Posterior cingulate gyrus (tissue), 11 donors: ENCODE measurements at regions of chr13 and their contacts with region 1.

Region 1: GRCh38 chr13:113816946-113817859 is 46.7 kb downstream of the GAS6 start:
- DNase-seq: peak; percentile 47 to 96 (median 80)

Region 2: DNA sequence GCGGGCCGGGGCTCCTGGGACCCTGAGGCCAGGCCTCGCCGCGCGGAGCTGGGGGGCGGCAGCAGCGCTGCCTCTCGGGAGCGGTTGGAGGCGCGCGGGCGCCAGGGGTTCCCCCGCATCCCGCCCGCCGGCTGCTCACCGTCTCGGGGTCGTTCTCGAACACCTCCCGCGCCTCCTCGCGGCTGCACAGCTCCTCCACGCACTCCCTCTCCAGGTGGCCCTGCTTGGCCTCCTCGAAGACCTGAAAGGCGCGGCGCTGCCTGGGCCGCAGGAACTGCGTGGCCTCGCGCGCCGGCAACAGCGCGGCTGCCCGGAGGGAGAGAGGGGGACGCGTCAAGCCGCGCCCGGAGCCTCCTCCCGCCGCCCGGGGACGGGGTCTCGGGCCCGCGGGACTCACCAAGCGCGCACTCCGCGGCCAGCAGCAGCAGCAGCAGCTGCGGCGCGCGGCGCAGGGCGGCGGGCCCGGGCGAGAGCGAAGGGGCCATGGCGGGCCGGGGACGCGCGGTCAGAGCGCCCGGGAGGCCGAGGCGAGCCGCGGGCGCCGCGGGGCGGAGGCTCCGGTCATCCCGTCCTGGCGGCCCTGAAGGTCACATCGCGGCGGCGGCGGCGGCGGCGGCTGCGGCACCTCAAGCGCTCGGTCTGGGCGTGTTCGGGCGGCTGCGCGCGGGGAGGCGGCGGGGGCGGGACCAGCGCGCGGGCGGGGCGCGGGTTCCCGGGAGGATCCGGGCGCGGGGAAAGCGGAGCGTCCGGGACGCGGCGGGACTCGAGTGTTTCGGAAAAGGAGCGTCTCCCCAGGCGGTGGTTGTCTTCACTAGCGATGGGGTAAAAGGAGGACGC is 46.5 kb after region 1 on chr13 and contains the start of gene GAS6:
- intact Hi-C with region 1: loop called (anchors 5 kb)
- DNase-seq: peak in 9 of 10 donors; percentile 45 to 94 (median 66)

Region 3: GRCh38 chr13:113904411-113904810 is 87.2 kb after region 1 on chr13:
- intact Hi-C with region 1: loop called (anchors 10 kb)
- DNase-seq: peak in 5 of 10 donors; percentile 44 to 94 (median 60)

Region 4: DNA sequence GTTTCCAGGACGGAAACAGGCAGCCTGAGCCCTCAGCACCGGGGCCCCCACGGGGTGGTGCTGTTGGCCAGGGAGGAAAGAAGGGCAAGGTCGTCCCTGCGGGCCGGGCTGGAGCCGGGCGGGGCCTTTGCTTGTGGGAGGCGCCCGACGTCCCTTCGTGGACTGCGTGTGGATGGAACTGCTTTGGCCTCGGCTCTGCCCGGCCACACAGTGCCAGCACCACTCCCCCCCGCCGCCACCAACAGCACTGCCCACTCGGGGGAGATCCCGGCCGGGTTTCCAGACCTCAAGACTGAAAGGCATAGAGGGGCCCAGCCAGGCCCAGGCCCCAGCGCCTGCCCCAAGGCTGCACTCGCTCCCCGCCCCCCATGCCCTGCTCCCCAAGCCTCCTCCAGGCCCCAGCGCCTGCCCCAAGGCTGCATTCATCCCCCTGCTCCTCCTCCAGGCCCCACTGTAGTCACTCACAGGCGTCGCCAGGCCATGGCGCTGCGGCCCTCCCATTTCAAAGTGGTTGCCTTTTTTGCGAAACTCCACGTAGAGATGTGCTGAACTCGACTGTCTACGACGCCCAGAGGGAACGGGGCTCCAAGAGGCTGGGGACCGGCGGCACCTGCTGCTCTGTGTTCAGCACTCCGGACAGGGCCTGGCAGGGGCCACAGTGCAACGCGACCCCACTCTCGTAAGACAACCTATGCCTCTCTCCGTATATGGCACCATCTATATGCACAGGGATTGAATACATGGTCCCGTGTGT is 134.2 kb after region 1 on chr13:
- intact Hi-C with region 1: loop called (anchors 5 kb)
- DNase-seq: peak; percentile 59 to 96 (median 74)

Region 5: DNA sequence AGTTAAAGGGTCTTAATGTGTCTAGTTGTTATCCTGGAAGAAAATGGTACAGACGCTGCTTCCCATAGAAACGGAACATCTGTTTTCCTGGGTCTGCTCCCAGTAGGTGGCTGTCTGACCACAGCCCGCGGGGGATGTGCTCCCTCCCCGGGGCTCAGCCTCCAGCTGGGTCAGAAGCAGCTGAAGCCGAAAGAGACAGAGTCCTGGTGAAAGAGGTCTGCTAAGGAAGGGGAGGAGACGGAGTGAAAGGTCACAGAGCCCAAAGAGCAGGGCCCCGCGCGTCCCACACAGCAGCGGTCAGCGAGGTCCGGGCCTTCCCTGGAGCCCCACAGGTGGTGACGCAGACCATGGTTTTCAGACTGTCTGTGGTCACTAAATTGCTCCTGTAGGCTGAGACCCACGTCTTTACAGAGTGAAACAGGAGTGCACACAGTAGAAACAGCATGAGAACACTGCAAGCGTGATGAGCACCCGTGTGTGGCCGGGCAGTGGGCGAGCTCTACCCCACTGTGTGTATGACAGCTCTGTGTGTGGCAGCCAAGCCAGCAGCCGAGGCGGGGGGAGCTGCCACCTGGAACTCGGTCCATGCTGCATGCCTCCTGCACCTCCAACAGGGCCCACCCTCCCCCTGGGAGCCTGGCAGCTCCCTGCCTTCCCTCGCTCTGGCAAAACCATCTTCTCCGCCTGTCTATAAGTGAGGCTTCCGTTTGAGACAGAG is 208.7 kb after region 1 on chr13:
- intact Hi-C with region 1: loop called (anchors 10 kb)
- DNase-seq: peak in 6 of 10 donors; percentile 64 to 94 (median 82)

Region 6: DNA sequence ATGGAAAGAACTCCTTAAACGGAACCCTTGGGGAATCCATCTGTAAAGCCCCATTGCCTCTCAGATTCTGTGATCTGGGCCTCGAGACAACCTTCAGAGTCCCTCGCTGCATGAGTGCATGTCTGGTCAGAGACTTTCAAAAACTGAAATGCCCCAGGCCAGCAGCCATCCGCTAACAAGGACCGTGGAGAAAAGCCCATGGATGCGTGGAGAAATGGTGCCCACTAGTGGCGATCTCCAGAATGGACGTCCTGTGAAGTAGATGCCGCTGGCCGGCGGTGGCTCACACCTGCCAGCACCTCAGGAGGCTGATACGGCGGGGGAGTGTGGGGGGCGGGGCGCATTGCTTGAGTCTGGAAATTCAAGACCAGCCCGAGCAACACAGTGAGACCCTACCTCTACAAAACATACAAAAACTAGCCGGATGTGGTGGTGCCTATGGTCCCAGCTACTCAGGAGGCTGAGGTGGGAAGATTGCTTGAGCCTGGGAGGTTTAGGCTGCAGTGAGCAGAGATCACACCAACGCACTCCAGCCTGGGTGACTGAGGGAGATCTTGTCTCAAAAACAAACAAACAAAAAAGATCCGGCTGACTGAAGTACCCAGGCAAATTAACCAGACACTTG is 409.6 kb after region 1 on chr13:
- intact Hi-C with region 1: loop called (anchors 2 kb)
- DNase-seq: peak; percentile 63 to 97 (median 88)